A549 (cell line): ENCODE measurements at regions of chr11 and their contacts with region 1.

Region 1: DNA sequence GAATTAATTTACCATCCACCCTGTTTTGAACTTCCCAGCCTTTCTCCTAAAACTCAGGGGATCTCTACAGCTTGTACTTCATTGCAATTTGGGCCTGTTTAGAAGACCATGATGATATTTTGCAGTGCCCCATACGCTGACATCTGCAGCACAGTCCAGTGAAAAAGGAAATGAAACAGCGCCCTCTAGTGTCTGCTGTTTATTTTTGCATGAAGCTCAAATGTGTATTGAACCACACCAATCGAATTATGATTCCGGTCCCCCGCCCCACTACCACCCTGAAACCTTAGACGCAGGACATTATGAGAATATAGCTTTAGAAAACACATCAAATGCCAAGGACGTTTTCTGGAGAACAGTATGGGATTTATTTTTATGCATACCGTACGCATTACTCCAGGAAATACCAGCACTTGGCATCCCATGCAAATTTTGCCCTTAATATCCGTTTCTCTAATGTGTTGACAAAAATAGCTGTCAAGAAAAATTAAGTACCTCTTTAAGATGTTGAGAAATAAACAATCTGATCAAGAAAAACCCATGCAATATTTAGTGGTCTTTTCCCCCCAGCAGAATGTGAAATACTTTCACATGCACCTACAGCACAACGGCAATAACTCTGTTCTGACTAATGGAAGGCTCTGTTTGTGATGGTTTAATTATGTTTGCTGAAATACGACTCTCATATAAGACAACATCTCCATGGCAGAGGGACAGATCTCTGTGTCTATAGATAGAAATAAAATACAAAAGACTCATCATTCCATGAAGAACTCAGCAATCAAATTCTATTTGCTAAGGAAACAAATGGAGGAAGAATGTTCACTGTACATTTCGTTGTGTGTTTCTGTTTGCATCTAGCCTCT is 93.9 kb downstream of the TECTA start:
- DNase-seq: peak; percentile 15 to 49
- ATAC-seq: peak; percentile 92 to 93
- H3K4me3 ChIP-seq: no peak overlapping the region
- H3K27ac ChIP-seq: no peak overlapping the region
- H3K4me1 ChIP-seq: no peaks in the 10 kb centered on the region
- CTCF ChIP-seq: peak; percentile 73
- EP300 ChIP-seq: no peak
- POLR2A ChIP-seq: no peak
- RAD21 ChIP-seq: peak; percentile 68 to 70

Region 2: GRCh38 chr11:120952461-120953434 is 242.2 kb before region 1 on chr11:
- CTCF ChIA-PET with region 1: interaction called, 10 read pairs
- POLR2A ChIA-PET with region 1: no interaction called
- DNase-seq: peak; percentile 67 to 74
- ATAC-seq: peak; percentile 84 to 95
- H3K4me3 ChIP-seq: 0 out of 3 replicates have a peak overlapping the region, but pooled peaks have one; percentile 10
- H3K27ac ChIP-seq: no peak overlapping the region
- H3K4me1 ChIP-seq: no peaks in the 10 kb centered on the region
- CTCF ChIP-seq: peak; percentile 57
- EP300 ChIP-seq: no peak
- POLR2A ChIP-seq: no peak
- RAD21 ChIP-seq: peak; percentile 76 to 82

Region 3: DNA sequence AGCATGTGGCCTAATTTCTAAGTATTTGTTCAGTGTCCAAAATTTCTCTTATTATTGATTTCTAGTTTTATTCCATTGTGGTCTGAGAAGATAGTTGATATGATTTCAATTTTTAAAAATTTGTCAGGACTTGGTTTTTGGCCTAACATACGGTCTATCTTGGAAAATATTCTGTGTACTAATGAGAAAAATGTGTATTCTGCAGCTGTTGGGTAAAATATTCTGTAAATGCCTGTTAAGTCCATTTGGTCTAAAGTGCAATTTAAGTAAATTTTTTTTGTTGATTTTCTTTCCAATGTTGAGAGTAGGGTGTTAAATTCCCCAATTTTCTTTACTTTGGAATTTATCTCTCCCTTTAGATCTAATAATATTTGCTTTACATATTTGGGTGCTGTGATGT is 15.7 kb before region 1 on chr11:
- CTCF ChIA-PET with region 1: interaction called, 10 read pairs
- POLR2A ChIA-PET with region 1: no interaction called
- DNase-seq: no peak
- ATAC-seq: no peak
- H3K4me3 ChIP-seq: no peak overlapping the region
- H3K27ac ChIP-seq: no peak overlapping the region
- H3K4me1 ChIP-seq: no peaks in the 10 kb centered on the region
- CTCF ChIP-seq: no peak
- EP300 ChIP-seq: no peak
- POLR2A ChIP-seq: no peak
- RAD21 ChIP-seq: no peak